PC-9 (cell line): ENCODE measurements at regions of chr6 and their contacts with region 1.

Region 1: DNA sequence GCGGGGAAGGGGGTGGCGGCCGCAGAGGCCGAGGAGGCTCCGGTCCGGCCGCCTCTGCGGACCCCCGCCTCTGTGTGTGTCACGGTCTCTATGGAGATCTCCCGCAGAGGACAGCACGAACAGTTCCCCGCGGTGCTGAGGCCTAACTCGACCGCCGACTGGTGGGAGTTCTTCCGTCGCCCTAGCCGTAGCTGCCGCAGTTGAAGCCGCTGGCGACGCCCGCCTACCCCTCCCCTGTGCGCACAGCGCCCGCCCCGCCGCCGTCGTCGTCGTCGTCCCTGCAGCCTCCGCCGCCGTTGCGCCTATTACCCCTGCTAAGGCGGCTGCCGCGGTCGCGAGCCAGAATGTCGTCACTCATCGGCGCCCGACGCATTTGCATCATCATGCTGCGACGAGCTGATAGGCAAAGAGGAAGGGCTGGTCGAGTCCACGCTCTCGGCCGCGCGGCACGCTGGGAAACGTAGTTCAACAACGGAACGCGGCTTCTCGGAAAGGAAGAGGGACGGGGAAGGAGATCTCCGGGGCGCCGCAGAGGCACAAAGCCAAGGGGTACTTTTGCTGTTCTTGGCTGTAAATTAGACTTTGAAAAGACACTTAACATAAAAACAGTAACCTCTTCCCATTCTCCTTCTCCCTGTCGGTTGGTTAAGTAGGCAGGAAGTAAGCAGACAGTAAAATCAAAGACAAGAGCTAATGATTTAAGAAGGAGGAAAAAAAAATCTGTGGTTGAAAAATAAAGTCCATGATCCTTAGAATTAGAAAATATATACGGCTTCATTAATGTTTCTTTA is at the start of gene NUP153:
- DNase-seq: peak; percentile 91 to 99
- H3K4me3 ChIP-seq: peak within 1 kb of the TSS; percentile 73
- H3K27ac ChIP-seq: peak within 1 kb of the TSS; percentile 89
- H3K4me1 ChIP-seq: peaks cover 24% of the 10 kb centered on the region
- H3K27me3 ChIP-seq: no peaks in the 10 kb centered on the region
- CTCF ChIP-seq: no peak
- total RNA-seq, gene NUP153: 50.7 and 74.1 TPM in 2 replicates

Region 2: DNA sequence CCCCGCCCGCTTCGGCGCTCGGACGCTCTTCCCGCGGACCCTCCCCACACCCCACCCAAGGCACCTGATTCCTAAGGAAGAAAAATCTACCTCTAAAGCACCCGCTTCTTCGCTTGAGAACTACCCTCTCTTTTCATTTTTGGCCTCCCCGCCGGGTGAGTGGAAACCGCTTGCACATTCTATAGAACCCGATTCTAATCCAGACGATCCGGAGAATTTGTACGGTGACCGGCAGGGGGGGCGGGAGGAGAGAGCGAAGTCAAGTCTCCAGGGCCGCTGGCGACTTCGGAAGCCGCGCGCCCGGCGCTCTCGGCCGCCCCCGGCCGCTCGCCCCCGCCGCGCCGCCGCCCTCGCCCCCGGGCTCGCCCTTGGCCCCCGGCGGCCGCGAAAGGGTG is 425.7 kb before region 1 on chr6 and contains the start of gene RBM24:
- CTCF ChIA-PET with region 1: no interaction called
- POLR2A ChIA-PET with region 1: no interaction called
- intact Hi-C with region 1: no loop called
- DNase-seq: peak in 1 of 2 experiments; percentile 43
- H3K4me3 ChIP-seq: peak within 1 kb of the TSS; percentile 28; the same call in 1 of the 2 replicates
- H3K27ac ChIP-seq: no peak within 1 kb of the TSS
- H3K4me1 ChIP-seq: peaks cover 21% of the 10 kb centered on the region
- H3K27me3 ChIP-seq: no peaks in the 10 kb centered on the region
- CTCF ChIP-seq: no peak
- total RNA-seq, gene RBM24: 0.72 and 0.85 TPM in 2 replicates

Region 3: DNA sequence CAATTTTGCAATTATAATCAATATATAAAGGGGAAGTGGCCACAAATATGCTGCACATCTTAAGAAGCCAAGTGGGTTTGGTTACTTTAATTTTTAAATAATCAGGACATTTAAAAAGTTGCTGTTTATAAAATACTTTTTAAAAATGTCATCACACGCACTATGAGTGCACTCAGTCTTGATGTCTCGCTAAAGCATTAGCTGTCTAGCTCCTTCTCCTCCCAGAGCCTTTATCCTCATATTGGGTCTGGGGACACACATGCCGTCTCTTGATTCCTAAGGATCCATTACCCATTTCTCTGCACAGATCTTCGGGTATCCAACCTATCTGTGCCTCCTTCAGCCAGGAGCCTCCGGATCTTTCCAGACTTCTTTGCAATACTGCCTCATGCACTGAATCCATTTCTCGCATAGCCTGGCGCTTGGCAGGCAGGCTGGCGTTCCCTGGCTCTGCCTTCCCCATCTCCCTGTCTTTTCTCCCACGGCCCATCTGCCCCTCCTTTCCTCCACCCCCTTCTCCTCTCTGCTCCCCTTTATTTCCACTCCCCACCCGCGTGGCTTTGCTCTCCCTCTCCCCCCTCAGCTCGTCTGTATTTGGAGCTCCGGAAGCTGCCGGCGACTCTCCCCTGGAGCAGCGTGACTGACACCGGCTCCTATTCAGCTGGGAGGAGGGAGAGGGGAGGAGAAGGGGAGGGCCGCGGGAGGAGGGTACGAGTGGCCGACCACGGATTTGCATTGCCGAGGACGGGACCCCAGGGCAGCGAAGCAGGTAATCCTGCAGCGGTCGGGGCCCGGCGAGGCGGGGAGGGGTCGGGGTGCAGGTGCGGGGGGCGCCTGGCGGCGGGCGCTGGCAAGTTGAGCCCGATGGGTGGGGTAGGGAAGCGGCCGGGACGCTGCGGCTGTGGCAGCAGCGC is 313.5 kb before region 1 on chr6 and contains the start of gene CAP2:
- CTCF ChIA-PET with region 1: no interaction called
- POLR2A ChIA-PET with region 1: interaction called, 10 read pairs
- intact Hi-C with region 1: no loop called
- DNase-seq: peak; percentile 45 to 74
- H3K4me3 ChIP-seq: peak within 1 kb of the TSS; percentile 74
- H3K27ac ChIP-seq: peak within 1 kb of the TSS; percentile 50
- H3K4me1 ChIP-seq: peaks cover 37% of the 10 kb centered on the region
- H3K27me3 ChIP-seq: no peaks in the 10 kb centered on the region
- CTCF ChIP-seq: no peak
- total RNA-seq, gene CAP2: 10.0 and 12.0 TPM in 2 replicates

Region 4: DNA sequence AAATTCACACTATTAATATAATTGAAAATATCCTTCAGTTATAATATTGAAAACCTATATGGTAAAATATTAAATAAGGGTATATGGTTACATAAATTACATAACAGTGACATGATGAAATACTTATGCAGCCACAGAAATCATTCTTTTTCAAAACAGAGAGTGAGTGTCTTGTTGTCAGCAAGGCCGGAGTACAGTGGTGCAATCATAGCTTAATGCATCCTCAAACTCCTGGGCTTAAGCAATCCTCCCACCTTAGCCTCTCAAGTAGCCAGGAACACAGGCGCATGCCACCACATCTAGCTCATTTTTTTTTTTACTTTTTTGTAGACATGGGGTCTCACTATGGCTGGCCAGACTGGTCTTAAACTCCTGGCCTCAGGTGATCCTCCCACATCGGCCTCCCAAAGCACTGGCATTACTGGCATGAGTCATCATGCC is 66.3 kb before region 1 on chr6:
- CTCF ChIA-PET with region 1: no interaction called
- POLR2A ChIA-PET with region 1: interaction called, 11 read pairs
- intact Hi-C with region 1: no loop called
- DNase-seq: no peak
- H3K4me3 ChIP-seq: no peak overlapping the region
- H3K27ac ChIP-seq: 0 out of 2 replicates have a peak overlapping the region, but pooled peaks have one; percentile 17
- H3K4me1 ChIP-seq: no peaks in the 10 kb centered on the region
- H3K27me3 ChIP-seq: no peaks in the 10 kb centered on the region
- CTCF ChIP-seq: no peak

Region 5: GRCh38 chr6:17672064-17672718 is 34.6 kb before region 1 on chr6:
- CTCF ChIA-PET with region 1: interaction called, 24 read pairs
- POLR2A ChIA-PET with region 1: no interaction called
- intact Hi-C with region 1: no loop called
- DNase-seq: no peak
- H3K4me3 ChIP-seq: no peak overlapping the region
- H3K27ac ChIP-seq: no peak overlapping the region
- H3K4me1 ChIP-seq: no peaks in the 10 kb centered on the region
- H3K27me3 ChIP-seq: no peaks in the 10 kb centered on the region
- CTCF ChIP-seq: no peak

Region 6: GRCh38 chr6:17758119-17758518 is 51.3 kb after region 1 on chr6:
- CTCF ChIA-PET with region 1: no interaction called
- POLR2A ChIA-PET with region 1: interaction called, 10 read pairs
- intact Hi-C with region 1: loop called (anchors 5 kb)
- DNase-seq: no peak
- H3K4me3 ChIP-seq: no peak overlapping the region
- H3K27ac ChIP-seq: no peak overlapping the region
- H3K4me1 ChIP-seq: no peaks in the 10 kb centered on the region
- H3K27me3 ChIP-seq: no peaks in the 10 kb centered on the region
- CTCF ChIP-seq: no peak